ENCODE measurements at regions of chr12 and their contacts with region 1.

Region 1: DNA sequence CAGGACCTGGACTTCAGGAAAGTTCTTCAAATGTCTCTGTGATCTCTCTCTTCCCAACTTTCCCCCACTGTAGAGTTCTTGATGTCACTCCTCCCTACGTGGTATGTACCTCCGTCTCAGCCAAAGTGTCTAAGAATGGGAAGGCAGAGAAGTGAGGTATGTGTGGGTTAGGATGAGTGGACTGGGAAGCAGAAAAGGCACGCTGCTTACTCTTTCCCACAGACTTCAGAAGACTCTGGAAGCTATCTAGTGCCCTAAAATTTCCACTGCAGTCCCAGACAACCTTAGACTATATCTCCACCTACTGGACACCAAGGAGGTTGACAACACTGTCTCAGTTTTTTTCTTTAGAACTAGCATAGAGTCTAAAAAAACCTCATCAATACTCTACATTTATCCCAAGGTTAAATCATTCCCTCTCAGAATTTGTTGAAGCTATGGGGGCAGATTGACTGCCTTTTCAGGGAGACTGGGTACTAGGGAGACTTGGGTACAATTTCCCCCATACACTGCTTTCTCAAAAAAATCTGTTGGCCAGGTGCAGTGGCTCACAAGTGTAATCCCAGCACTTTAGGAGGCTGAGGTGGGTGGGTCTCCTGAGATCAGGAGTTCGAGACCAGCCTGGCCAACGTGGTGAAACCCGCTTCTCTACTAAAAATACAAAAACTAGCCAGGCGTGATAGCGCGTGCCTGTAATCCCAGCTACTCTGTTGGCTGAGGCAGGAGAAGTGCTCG is 20.6 kb upstream of the ITGA5 start:
- DNase-seq: no peak
- H3K4me3 Mint-ChIP-seq: no peak overlapping the region
- H3K27ac Mint-ChIP-seq: no peak overlapping the region
- H3K4me1 Mint-ChIP-seq: peaks cover 13% of the 10 kb centered on the region
- H3K27me3 Mint-ChIP-seq: no peaks in the 10 kb centered on the region

Region 2: GRCh38 chr12:54419088-54419892 is 20.4 kb before region 1 on chr12 and contains the start of gene ITGA5:
- CTCF ChIA-PET with region 1: interaction called, 25 read pairs
- intact Hi-C with region 1: loop called (anchors 1 kb)
- DNase-seq: peak; percentile 59
- H3K4me3 Mint-ChIP-seq: peak within 1 kb of the TSS; percentile 95
- H3K27ac Mint-ChIP-seq: peak within 1 kb of the TSS; percentile 89
- H3K4me1 Mint-ChIP-seq: peaks cover 52% of the 10 kb centered on the region
- H3K27me3 Mint-ChIP-seq: no peaks in the 10 kb centered on the region
- total RNA-seq, gene ITGA5: 17.9 to 18.4 TPM

Measured in activated naive CD4-positive, alpha-beta T cell treated with anti-CD3 and anti-CD28 coated beads for 36 hours (primary cell).